Aorta (tissue), 5 donors: ENCODE measurements at regions of chr9 and their contacts with region 1.

Region 1: DNA sequence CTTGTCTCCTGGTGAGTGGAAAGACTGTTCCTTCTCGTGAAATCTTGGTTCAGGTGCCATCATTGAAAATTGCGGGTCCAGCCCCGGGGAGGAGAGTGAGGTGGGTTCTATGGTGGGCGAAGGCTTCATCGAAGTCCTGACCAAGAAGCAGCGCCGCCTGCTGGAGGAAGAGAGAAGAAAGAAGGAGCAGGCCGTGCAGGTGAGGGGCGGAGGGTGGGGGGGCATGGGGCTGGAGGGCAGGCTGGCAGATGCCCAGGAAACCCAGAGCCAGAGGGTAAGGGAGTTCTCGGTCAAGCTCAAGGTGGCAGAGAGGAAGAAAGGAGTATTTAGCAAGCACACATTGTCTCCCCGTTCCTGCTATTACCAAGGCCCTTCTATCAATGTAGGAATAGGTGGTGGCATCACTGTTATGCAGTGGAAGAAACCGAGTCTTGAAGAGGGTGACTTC is 24.3 kb upstream of the POMT1 start:
- DNase-seq: peak in 1 of 2 donors; percentile 82
- ATAC-seq: no peak
- H3K4me3 ChIP-seq: no peak overlapping the region
- H3K27ac ChIP-seq: no peak overlapping the region
- H3K4me1 ChIP-seq: no peaks in the 10 kb centered on the region
- H3K27me3 ChIP-seq: no peaks in the 10 kb centered on the region

Region 2: GRCh38 chr9:131349881-131350563 is 128.4 kb before region 1 on chr9:
- intact Hi-C with region 1: loop called (anchors 5 to 10 kb)
- DNase-seq: peak; percentile 94 to 97
- ATAC-seq: peak; percentile 93
- H3K4me3 ChIP-seq: no peak overlapping the region
- H3K27ac ChIP-seq: no peak overlapping the region
- H3K4me1 ChIP-seq: no peaks in the 10 kb centered on the region
- H3K27me3 ChIP-seq: no peaks in the 10 kb centered on the region

Region 3: GRCh38 chr9:131379056-131379455 is 99.4 kb before region 1 on chr9:
- intact Hi-C with region 1: loop called in 1 of 2 experiments (anchors 5 kb)
- DNase-seq: no peak
- ATAC-seq: no peak
- H3K4me3 ChIP-seq: no peak overlapping the region
- H3K27ac ChIP-seq: no peak overlapping the region
- H3K4me1 ChIP-seq: no peaks in the 10 kb centered on the region
- H3K27me3 ChIP-seq: no peaks in the 10 kb centered on the region